Transverse colon (tissue), 4 donors: ENCODE measurements at regions of chr9 and their contacts with region 1.

Region 1: GRCh38 chr9:128333451-128333869 is 6.9 kb upstream of the SLC27A4 start:
- DNase-seq: no peak
- H3K4me3 ChIP-seq: no peak overlapping the region
- H3K27ac ChIP-seq: no peak overlapping the region
- H3K4me1 ChIP-seq: peaks cover 0 to 6% (median 3%) of the 10 kb centered on the region in 4 donors
- H3K27me3 ChIP-seq: no peaks in the 10 kb centered on the region
- CTCF ChIP-seq: no peak
- EP300 ChIP-seq: no peak
- POLR2A ChIP-seq: no peak

Region 2: DNA sequence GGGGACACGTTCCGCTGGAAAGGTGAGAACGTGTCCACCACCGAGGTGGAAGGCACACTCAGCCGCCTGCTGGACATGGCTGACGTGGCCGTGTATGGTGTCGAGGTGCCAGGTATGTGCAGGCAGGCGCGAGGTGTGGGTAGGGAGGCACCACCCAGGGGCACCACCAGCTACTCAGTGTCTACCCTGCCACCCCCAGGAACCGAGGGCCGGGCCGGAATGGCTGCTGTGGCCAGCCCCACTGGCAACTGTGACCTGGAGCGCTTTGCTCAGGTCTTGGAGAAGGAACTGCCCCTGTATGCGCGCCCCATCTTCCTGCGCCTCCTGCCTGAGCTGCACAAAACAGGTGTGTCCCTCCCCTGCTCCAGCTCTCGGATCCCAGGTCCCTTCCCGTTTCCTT is 22.0 kb after region 1 on chr9:
- in situ Hi-C with region 1: no loop called
- intact Hi-C with region 1: loop called (anchors 1 kb)
- DNase-seq: no peak
- H3K4me3 ChIP-seq: no peak overlapping the region
- H3K27ac ChIP-seq: no peak overlapping the region
- H3K4me1 ChIP-seq: no peaks in the 10 kb centered on the region
- H3K27me3 ChIP-seq: no peaks in the 10 kb centered on the region
- CTCF ChIP-seq: no peak
- EP300 ChIP-seq: no peak
- POLR2A ChIP-seq: no peak